A549 (cell line): ENCODE measurements at regions of chr11 and their contacts with region 1.

Region 1: GRCh38 chr11:10366568-10367370 is 61.9 kb downstream of the ADM start:
- DNase-seq: peak; percentile 78 to 96
- ATAC-seq: peak; percentile 97 to 98
- H3K4me3 ChIP-seq: no peak overlapping the region
- H3K27ac ChIP-seq: peak overlapping the region; percentile 78 to 84
- H3K4me1 ChIP-seq: peaks cover 15% of the 10 kb centered on the region
- CTCF ChIP-seq: peak; percentile 86
- EP300 ChIP-seq: peak in 1 of 2 experiments; percentile 42; a peak in 1 of 5 replicates
- POLR2A ChIP-seq: no peak
- RAD21 ChIP-seq: peak; percentile 91 to 96

Region 2: GRCh38 chr11:10322830-10323792 is 43.7 kb before region 1 on chr11:
- CTCF ChIA-PET with region 1: interaction called, 59 read pairs
- POLR2A ChIA-PET with region 1: interaction called, 6 read pairs
- DNase-seq: peak; percentile 65 to 87
- ATAC-seq: peak; percentile 79 to 80
- H3K4me3 ChIP-seq: peak overlapping the region; percentile 3; the same call in 1 of the 3 replicates
- H3K27ac ChIP-seq: peak overlapping the region; percentile 73 to 84
- H3K4me1 ChIP-seq: peaks cover 65% of the 10 kb centered on the region
- CTCF ChIP-seq: peak; percentile 73
- EP300 ChIP-seq: no peak
- POLR2A ChIP-seq: no peak
- RAD21 ChIP-seq: peak; percentile 84 to 89

Region 3: DNA sequence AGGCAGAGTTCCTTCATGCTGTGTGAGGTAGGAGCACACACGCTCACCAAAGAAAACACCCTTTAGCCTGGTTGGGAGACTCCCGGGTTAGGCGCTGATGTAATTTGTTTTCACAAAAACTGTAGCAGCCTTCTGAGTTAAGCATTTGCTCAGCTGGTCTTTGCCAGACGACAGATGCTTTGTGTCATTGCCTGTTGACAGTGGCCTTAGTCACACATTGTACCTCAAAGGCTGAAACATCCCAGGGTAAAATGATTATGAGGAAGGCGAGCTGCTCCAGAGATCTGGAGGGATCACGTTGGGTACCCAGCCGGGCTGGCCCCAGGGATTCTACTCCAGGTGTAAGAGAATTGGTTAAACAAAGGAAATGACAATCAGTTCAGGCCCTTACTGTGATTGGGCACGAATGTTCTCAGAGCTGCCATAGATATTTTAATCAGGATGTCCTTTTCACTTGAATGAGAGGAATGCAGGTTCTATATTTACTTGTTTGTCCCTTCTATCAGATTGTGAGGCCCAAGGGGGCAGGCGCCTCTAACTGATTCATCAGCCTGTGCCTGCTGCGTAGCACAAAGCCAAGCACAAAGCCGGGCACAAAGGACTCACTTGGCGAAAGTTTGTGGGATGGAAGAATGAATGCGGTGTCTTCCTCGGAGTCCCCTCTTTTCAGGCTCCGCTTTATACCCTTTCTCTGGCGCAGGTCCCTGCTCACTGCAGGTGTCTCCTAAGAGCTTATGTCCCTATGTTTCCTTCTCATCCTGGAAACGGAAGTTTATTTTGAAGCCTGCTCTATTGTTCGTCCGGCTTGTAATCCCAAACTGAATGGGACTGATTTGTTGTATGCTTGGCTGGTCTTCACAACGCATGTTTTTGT is 14.8 kb before region 1 on chr11:
- CTCF ChIA-PET with region 1: interaction called, 34 read pairs
- POLR2A ChIA-PET with region 1: no interaction called
- DNase-seq: peak; percentile 21 to 59
- ATAC-seq: peak; percentile 66 to 73
- H3K4me3 ChIP-seq: no peak overlapping the region
- H3K27ac ChIP-seq: peak overlapping the region; percentile 50 to 68
- H3K4me1 ChIP-seq: peaks cover 33% of the 10 kb centered on the region
- CTCF ChIP-seq: no peak
- EP300 ChIP-seq: no peak
- POLR2A ChIP-seq: no peak
- RAD21 ChIP-seq: no peak

Region 4: GRCh38 chr11:10382518-10382917 is 15.7 kb after region 1 on chr11:
- CTCF ChIA-PET with region 1: interaction called, 52 read pairs
- POLR2A ChIA-PET with region 1: no interaction called
- DNase-seq: peak in 1 of 2 experiments; percentile 64
- ATAC-seq: peak; percentile 45 to 84; a peak in 3 of 6 replicates
- H3K4me3 ChIP-seq: no peak overlapping the region
- H3K27ac ChIP-seq: no peak overlapping the region
- H3K4me1 ChIP-seq: peaks cover 16% of the 10 kb centered on the region; the same call in 2 of the 3 replicates
- CTCF ChIP-seq: no peak
- EP300 ChIP-seq: no peak
- POLR2A ChIP-seq: no peak
- RAD21 ChIP-seq: no peak